ENCODE measurements at regions of chr17 and their contacts with region 1.

Region 1: GRCh38 chr17:2054512-2055291 is at the start of gene HIC1:
- DNase-seq: peak; percentile 83
- CTCF ChIP-seq: peak; percentile 94

Region 2: GRCh38 chr17:2034806-2035540 is 19.7 kb before region 1 on chr17:
- CTCF ChIA-PET with region 1: no interaction called
- POLR2A ChIA-PET with region 1: no interaction called
- DNase-seq: no peak
- CTCF ChIP-seq: no peak

Region 3: GRCh38 chr17:2070241-2071023 is 15.7 kb after region 1 on chr17:
- CTCF ChIA-PET with region 1: interaction called, 23 read pairs
- POLR2A ChIA-PET with region 1: interaction called, 10 read pairs
- DNase-seq: peak; percentile 84
- CTCF ChIP-seq: no peak

Region 4: DNA sequence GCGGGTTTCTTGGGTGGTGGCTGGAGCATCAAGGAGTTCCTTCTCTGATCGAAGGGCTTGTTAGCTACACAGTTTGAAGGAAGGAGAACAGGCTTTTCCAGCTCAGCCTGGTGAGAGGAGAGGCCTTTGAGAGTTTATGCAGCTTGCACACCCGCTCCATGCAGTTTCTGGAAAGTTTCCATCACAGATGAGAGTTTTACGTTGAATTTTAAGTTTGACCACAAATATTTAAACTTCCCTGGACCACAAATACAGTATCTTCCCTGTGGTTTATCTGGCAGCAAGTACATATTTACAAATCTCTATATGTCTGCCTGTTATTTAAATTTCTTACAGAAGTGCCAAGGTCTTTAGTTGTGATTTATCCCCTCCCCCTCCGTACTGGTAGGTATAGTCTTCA is 57.0 kb after region 1 on chr17:
- CTCF ChIA-PET with region 1: interaction called, 8 read pairs
- POLR2A ChIA-PET with region 1: interaction called, 10 read pairs
- DNase-seq: no peak
- CTCF ChIP-seq: no peak

Region 5: GRCh38 chr17:2253768-2254406 is 199.2 kb after region 1 on chr17:
- CTCF ChIA-PET with region 1: interaction called, 88 read pairs
- POLR2A ChIA-PET with region 1: interaction called, 5 read pairs
- DNase-seq: peak; percentile 81
- CTCF ChIP-seq: no peak

Region 6: GRCh38 chr17:2282297-2282873 is 227.7 kb after region 1 on chr17:
- CTCF ChIA-PET with region 1: interaction called, 100 read pairs
- POLR2A ChIA-PET with region 1: no interaction called
- DNase-seq: peak; percentile 61
- CTCF ChIP-seq: peak; percentile 43

Region 7: DNA sequence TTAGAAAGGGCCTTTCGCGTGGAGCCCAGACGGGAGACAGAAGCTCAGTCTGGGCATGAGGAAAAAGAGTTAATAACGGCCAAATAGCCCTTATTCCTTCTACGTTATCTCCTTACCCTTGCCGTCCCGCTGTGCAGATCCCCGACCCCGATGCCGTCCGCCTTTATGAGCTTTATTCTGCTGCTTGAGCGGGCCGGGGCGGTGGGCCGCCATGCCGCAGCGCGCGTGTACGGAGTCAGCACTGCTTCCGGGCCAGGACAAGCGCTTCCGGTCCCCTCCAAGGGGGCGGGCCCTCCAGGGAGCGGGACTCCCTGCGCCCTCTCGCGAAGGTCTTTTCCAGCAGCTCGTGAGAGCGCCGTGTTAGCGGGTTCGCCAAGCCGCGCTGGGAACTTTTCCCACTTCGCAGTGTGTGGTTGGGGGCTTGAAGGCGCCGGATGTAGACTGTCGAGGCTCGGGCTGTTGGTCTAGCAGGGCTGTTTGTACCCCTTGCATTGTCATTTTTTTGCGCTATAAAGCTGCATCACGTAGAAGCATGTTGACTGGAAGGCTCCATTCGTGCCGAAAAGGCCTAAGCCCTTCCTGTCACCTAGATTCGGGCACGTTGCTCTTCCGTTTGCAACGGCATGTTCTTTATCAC is 281.6 kb after region 1 on chr17 and contains the start of gene TSR1:
- CTCF ChIA-PET with region 1: interaction called, 13 read pairs
- POLR2A ChIA-PET with region 1: interaction called, 3 read pairs
- DNase-seq: peak; percentile 98
- CTCF ChIP-seq: peak; percentile 45

Measured in GM10248 (cell line).